Heart right ventricle (tissue), 16 donors: ENCODE measurements at regions of chr7 and their contacts with region 1.

Region 1: DNA sequence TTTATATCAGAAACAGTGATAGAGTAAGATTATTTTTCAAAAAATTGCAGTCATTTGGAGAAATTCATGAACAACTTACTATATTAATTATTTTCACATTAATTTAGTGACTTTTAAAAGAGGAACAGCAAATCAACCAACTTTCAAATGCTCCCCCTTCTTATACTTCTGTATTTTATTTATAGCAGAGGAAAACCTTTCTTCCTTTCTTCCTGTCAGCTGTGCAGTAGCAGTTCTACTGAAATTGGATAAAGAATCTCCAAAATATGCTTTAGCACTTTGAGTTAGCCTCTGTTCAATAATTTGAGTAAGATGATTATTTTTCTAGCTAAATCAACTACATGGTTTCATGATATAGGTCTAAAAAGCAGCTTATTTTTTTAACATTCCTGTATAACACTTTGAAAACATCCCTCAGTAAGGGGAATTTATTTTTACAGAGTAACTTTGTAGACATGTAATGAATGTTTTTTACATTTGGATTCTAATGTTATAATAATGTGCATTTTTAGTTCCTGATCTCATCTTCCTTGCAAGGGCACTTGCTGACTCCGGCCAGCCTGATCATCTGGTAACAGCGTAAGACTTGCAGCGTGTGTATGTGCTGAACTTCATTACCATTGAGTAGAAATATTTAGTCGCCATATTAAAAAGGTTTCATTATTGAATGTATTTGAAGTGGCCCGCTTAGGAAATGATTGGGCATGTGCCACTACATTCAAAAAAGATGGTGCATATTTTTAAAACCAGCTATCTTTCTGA is 158.3 kb upstream of the HDAC9 start:
- DNase-seq: peak in 1 of 2 donors; percentile 15
- ATAC-seq: peak in 4 of 8 donors; percentile 43 to 57 (median 47)
- H3K4me3 ChIP-seq: peak overlapping the region in 1 of 10 donors; percentile 8
- H3K27ac ChIP-seq: peak overlapping the region in 2 of 10 donors; percentile 3 to 6
- H3K4me1 ChIP-seq: peaks cover 0 to 28% (median 0%) of the 10 kb centered on the region in 9 donors
- H3K27me3 ChIP-seq: no peaks in the 10 kb centered on the region
- CTCF ChIP-seq: no peak

Region 2: GRCh38 chr7:17159500-17160037 is 1177.7 kb before region 1 on chr7:
- intact Hi-C with region 1: loop called in 1 of 10 experiments (anchors 10 kb)
- DNase-seq: no peak
- ATAC-seq: no peak
- H3K4me3 ChIP-seq: no peak overlapping the region
- H3K27ac ChIP-seq: no peak overlapping the region
- H3K4me1 ChIP-seq: no peaks in the 10 kb centered on the region
- H3K27me3 ChIP-seq: no peaks in the 10 kb centered on the region
- CTCF ChIP-seq: no peak

Region 3: GRCh38 chr7:18212758-18213157 is 124.5 kb before region 1 on chr7:
- intact Hi-C with region 1: loop called in 3 of 10 experiments (anchors 5 to 10 kb)
- DNase-seq: no peak
- ATAC-seq: peak; percentile 49 to 92 (median 76)
- H3K4me3 ChIP-seq: no peak overlapping the region
- H3K27ac ChIP-seq: peak overlapping the region in 6 of 10 donors; percentile 5 to 66 (median 46)
- H3K4me1 ChIP-seq: peaks cover 0 to 31% (median 18%) of the 10 kb centered on the region in 9 donors
- H3K27me3 ChIP-seq: no peaks in the 10 kb centered on the region
- CTCF ChIP-seq: no peak